HEK293 (cell line): ENCODE measurements at regions of chr15 and their contacts with region 1.

Region 1: DNA sequence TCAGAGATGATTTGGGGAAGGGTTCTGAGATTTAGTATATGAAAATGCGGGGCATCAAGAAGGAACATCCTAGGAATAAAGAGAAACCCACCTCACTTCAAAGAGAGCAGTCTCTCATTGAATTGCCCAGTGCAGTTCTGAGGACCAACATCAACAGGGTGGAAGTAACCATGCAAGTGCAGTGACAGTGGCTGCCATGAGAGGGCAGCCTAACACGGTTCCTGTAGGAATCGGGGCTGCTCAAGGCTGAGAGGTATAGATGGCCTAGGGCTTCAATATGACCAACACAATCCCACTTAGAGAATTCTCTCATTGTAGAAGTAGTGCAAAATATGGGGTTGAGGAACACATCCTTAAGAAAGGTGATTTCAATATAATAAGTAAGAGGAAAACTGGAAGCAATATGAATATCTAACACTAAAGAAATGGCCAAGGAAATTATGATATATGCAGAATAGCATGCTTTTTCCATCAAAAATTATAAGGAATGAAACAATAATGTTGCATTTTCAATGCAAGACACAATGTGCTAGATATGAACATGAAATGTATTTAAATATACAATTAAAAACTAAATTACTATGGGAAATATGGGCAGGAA is 51.1 kb upstream of the ARRDC4 start:
- H3K4me3 ChIP-seq: no peak overlapping the region
- H3K27ac ChIP-seq: no peak overlapping the region
- H3K4me1 ChIP-seq: no peaks in the 10 kb centered on the region
- CTCF ChIP-seq: peak; percentile 39; the same call in 1 of the 2 replicates

Region 2: GRCh38 chr15:98085003-98085639 is 175.7 kb after region 1 on chr15:
- CTCF ChIA-PET with region 1: interaction called, 34 read pairs
- POLR2A ChIA-PET with region 1: no interaction called
- H3K4me3 ChIP-seq: no peak overlapping the region
- H3K27ac ChIP-seq: no peak overlapping the region
- H3K4me1 ChIP-seq: 0 out of 2 replicates have a peak, but pooled peaks cover 3% of the 10 kb centered on the region
- CTCF ChIP-seq: no peak